ENCODE measurements at regions of chr3 and their contacts with region 1.

Region 1: DNA sequence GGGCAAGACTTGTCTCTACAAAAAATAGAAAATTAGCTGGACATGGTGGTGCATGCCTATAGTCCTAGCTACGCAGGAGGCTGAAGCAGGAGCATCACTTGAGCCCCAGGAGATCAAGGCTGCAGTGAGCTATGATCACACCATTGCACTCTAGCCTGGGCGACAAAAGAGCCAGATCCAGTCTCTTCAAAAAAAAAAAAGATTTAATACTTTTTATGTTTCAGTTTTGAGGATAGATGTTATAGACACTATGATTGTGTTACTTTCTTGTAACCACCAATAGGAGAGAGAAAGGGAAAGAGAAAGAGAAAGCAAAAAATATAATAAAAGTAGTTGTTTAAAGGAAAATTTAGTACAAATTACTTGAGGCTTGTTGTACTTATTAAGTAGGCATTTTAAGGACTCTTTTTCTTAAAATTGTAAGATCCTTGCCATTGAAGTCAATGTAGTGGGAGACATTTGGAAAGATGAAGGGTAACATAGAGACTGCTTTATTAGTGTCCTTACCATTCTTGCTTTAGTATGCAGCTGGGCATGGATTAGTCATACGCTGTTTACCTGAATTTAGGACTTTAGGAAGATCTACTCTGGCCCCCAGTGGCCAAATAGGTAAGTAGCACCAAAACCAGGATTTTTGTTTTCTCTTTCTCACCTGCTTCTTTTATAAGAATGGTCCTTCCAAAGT is 35.1 kb upstream of the ZDHHC23 start:
- DNase-seq: peak; percentile 58
- H3K4me3 ChIP-seq: no peak overlapping the region
- H3K27ac ChIP-seq: no peak overlapping the region
- H3K4me1 ChIP-seq: no peaks in the 10 kb centered on the region
- H3K27me3 ChIP-seq: no peaks in the 10 kb centered on the region
- CTCF ChIP-seq: peak; percentile 65

Region 2: DNA sequence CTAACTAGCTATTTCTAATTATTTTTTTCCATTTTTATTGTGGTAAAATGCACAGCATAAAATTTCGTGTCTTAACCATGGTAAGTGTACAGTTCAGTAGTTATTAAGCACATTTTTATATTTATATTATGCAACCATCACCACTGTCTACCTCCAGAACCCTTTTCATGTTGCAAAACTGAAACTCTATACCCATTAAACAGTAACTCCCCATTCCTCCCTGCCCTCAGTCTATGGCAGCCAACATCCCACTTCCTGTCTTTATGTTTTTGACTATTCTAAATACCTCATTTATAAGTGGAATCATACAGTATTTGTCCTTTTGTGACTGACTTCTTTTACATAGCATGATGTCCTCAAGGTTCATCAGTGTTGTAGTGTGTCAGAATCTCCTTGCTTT is 1325.4 kb before region 1 on chr3:
- CTCF ChIA-PET with region 1: no interaction called
- POLR2A ChIA-PET with region 1: no interaction called
- intact Hi-C with region 1: no loop called
- DNase-seq: no peak
- H3K4me3 ChIP-seq: no peak overlapping the region
- H3K27ac ChIP-seq: no peak overlapping the region
- H3K4me1 ChIP-seq: no peaks in the 10 kb centered on the region
- H3K27me3 ChIP-seq: no peaks in the 10 kb centered on the region
- CTCF ChIP-seq: no peak

Region 3: DNA sequence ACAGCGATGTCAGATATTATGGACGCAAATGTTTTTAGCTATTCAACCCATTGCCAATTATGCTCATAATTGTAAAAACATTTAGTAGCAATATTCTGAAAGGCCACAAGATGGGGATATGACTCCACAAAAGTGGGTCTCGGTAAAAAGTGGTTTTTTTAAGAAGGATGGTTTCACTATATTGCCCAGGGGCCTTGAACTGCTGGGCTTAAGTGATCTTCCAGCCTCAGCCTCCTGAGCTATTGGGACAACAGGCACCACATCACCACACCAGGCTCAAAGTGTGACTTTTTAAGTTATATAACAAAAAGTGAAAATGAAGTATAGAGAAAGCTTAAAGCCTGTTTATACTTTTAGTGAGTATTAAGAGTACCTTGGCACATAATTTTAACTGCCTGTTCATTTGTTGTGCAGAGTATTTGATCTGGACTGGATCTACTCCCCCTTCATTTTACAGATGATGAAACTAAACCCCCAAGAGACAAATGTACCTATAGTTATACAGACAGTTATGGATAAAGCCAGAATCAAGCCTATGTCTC is 176.1 kb before region 1 on chr3:
- CTCF ChIA-PET with region 1: no interaction called
- POLR2A ChIA-PET with region 1: no interaction called
- intact Hi-C with region 1: loop called (anchors 5 kb)
- DNase-seq: peak; percentile 79
- H3K4me3 ChIP-seq: no peak overlapping the region
- H3K27ac ChIP-seq: peak overlapping the region; percentile 22
- H3K4me1 ChIP-seq: peaks cover 33% of the 10 kb centered on the region
- H3K27me3 ChIP-seq: no peaks in the 10 kb centered on the region
- CTCF ChIP-seq: peak; percentile 70

Region 4: DNA sequence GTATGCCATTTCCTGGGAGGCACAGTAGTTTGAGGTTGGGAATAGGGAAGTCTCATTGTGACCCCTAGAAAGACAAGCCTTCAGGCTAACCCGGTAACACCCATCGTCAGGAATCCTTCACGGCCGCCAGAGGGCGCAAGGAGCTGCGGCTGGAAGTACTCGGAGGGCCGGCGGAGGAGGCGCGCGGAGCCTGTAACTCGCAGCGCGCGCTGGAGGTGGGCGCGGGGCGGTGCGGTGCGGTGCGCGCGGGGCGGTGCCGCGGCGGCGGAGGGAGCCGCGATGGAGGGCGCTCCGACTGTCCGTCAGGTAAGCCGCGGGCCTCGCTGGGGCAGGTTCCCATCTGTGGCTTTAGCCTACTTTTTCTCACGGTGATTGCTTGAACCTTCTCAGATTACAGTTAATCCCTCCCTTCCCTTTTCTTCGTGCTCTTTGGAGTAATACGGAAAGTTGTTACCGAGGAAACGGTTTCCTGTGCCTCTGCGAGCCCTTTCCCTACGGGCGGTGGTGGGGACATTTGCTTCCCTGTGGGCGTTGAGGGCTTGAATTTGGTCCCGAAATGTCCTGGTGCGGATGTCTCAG is 74.0 kb before region 1 on chr3 and contains the start of gene GRAMD1C:
- CTCF ChIA-PET with region 1: interaction called, 3 read pairs
- POLR2A ChIA-PET with region 1: no interaction called
- intact Hi-C with region 1: loop called (anchors 2 kb)
- DNase-seq: peak; percentile 94
- H3K4me3 ChIP-seq: peak within 1 kb of the TSS; percentile 56
- H3K27ac ChIP-seq: peak within 1 kb of the TSS; percentile 41
- H3K4me1 ChIP-seq: peaks cover 3% of the 10 kb centered on the region
- H3K27me3 ChIP-seq: no peaks in the 10 kb centered on the region
- CTCF ChIP-seq: peak; percentile 88
- total RNA-seq, gene GRAMD1C: 3.1 and 4.5 TPM in 2 replicates